Heart left ventricle (tissue), 16 donors: ENCODE measurements at regions of chr3 and their contacts with region 1.

Region 1: DNA sequence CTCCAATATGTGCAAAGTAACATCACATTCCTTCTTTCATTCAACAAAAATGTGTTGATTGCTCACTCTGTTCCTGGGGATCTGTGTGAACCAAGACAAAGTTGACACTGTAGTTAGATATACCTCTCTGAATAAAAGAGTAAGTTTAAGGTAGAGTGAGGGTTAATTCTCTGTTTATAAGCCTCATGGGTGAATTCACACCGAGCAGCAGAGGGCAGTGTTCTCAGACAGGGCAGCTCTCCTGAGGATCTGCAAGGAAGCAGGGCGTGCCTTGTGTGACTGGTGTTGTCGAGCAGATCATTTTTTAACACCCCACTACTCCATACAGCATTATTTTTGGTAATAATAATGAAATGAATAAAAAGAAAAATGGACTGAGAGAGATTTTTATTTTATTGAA is 34.4 kb downstream of the PAQR9 start:
- DNase-seq: peak in 2 of 5 donors; percentile 50 to 66
- ATAC-seq: peak; percentile 71 to 82 (median 78)
- H3K4me3 ChIP-seq: no peak overlapping the region
- H3K27ac ChIP-seq: no peak overlapping the region
- H3K4me1 ChIP-seq: peaks cover 0 to 6% (median 0%) of the 10 kb centered on the region in 12 donors
- H3K27me3 ChIP-seq: no peaks in the 10 kb centered on the region
- CTCF ChIP-seq: peak; percentile 23 to 58 (median 44)
- POLR2A ChIP-seq: no peak

Region 2: DNA sequence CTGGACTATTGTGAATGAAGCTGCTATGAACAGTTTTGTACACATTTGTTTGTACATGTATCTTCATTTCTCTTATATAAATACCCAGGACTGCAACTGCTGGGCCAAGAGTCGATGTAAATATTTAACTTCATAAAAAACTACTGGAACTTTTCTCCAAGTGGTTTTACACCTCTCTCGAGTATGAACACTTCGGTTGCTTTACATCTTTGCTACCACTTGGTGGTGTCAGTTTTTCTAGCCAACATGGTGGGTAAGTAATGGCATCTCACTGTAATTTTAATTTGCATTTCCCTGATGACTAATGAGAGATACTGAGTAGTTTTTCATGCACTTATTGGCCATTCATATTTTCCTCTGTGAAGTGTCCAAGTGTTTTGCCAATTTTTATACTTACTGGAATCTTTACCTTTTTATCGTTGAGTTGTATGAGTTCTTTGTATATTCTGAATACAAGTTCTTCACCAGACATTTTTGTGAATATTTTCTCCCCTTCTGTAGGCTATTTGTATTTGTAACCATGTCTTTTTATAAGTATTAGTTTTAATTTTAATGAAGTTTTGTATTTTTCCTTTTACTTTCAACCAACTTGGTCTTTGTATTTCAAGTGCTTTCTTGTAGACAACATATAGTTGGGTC is 84.7 kb before region 1 on chr3:
- intact Hi-C with region 1: loop called in 1 of 10 experiments (anchors 10 kb)
- DNase-seq: no peak
- ATAC-seq: no peak
- H3K4me3 ChIP-seq: no peak overlapping the region
- H3K27ac ChIP-seq: no peak overlapping the region
- H3K4me1 ChIP-seq: peaks cover 0 to 13% (median 4%) of the 10 kb centered on the region in 12 donors
- H3K27me3 ChIP-seq: no peaks in the 10 kb centered on the region
- CTCF ChIP-seq: peak in 8 of 12 donors; percentile 20 to 48 (median 36)
- POLR2A ChIP-seq: no peak

Region 3: GRCh38 chr3:142987080-142987700 is 58.1 kb after region 1 on chr3:
- intact Hi-C with region 1: loop called in 6 of 10 experiments (anchors 2 to 5 kb)
- DNase-seq: no peak
- ATAC-seq: peak; percentile 51 to 69 (median 60)
- H3K4me3 ChIP-seq: peak overlapping the region in 2 of 12 donors; percentile 1 to 3
- H3K27ac ChIP-seq: peak overlapping the region in 10 of 12 donors; percentile 12 to 75 (median 52)
- H3K4me1 ChIP-seq: peaks cover 0 to 14% (median 6%) of the 10 kb centered on the region in 12 donors
- H3K27me3 ChIP-seq: no peaks in the 10 kb centered on the region
- CTCF ChIP-seq: peak; percentile 58 to 77 (median 70)
- POLR2A ChIP-seq: no peak